ENCODE measurements at regions of chr13 and their contacts with region 1.

Region 1: GRCh38 chr13:30142486-30143211 is 164.7 kb downstream of the KATNAL1 start:
- DNase-seq: peak; percentile 28
- H3K4me3 Mint-ChIP-seq: peak overlapping the region; percentile 31
- H3K27ac Mint-ChIP-seq: peak overlapping the region; percentile 86
- H3K4me1 Mint-ChIP-seq: peaks cover 61% of the 10 kb centered on the region
- H3K27me3 Mint-ChIP-seq: peaks cover 4% of the 10 kb centered on the region

Region 2: DNA sequence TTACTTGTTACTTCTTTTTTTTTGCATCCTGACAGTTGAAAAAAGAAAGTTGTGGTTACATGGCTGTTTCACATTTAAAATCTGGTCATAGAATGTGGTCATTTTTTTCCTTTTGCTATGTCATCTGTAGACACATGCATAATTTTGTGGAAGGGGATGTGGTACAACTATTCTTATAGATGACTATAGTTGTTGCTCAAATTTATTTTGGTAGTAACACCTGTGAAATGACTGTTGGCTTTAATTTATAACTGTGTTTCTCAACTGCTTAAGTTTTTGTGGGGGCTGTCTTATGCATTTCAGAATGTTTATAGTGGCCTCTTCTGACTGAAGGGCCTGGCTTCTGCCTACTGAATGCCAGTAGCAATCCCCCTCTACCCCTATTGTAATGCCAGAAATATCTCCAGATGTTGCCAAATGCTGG is 1873.8 kb before region 1 on chr13:
- intact Hi-C with region 1: loop called (anchors 5 kb)
- DNase-seq: no peak
- H3K4me3 Mint-ChIP-seq: peak overlapping the region; percentile 49
- H3K27ac Mint-ChIP-seq: peak overlapping the region; percentile 70
- H3K4me1 Mint-ChIP-seq: peaks cover 27% of the 10 kb centered on the region
- H3K27me3 Mint-ChIP-seq: no peaks in the 10 kb centered on the region

Region 3: DNA sequence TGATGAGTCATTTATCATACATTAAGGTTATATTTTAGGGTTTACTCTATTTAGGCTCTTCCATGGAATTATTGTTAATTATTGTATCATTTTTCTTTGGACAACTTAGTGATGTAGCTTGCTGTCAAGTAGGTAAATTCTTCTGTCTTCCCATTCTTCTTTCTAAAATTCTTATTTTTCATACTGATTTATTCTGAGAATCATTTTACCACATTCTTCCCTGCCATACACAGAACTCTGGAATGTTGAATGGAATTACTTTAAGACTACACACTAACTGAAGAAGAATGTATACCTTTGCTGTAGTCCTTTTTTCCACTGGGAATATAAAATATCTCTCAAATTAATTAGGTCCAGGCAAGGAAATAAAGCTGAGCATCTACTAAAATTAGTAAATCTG is 522.7 kb before region 1 on chr13:
- intact Hi-C with region 1: no loop called
- DNase-seq: no peak
- H3K4me3 Mint-ChIP-seq: no peak overlapping the region
- H3K27ac Mint-ChIP-seq: no peak overlapping the region
- H3K4me1 Mint-ChIP-seq: no peaks in the 10 kb centered on the region
- H3K27me3 Mint-ChIP-seq: peaks cover 34% of the 10 kb centered on the region

Region 4: GRCh38 chr13:29978211-29978610 is 164.4 kb before region 1 on chr13:
- intact Hi-C with region 1: no loop called
- DNase-seq: no peak
- H3K4me3 Mint-ChIP-seq: no peak overlapping the region
- H3K27ac Mint-ChIP-seq: no peak overlapping the region
- H3K4me1 Mint-ChIP-seq: peaks cover 16% of the 10 kb centered on the region
- H3K27me3 Mint-ChIP-seq: peaks cover 8% of the 10 kb centered on the region

Region 5: DNA sequence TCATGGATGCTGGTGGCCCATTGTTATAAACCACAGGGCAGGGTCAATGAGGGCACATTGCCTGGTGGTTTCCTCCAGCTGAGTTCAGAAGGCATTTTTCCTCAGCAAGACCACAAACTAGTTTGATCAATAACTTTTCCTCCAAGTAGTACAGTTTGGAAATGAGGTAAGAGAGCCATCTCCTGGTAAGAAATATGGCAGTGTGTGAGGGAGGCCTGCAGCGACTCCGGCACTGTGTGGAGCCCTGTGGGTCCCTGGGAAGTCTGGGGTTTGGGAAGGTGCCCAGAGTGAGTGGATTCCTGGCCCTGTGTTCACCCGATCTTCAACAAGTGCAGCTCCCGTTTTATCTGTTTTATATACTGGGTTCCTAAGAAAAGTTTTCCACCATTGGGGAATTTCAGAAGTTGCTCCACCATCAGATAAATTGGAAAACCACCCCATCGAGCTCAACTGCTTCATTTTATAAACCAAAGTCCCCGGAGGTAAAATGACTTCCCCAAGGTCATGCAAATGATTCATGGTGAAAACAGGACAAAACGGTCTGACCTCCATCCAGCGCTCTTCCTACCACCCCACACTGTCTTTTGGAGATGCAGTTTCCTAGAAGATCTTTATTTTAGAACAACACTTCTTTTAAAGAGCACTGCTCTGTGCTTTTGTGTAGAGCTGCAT is 16.3 kb after region 1 on chr13:
- intact Hi-C with region 1: loop called (anchors 1 kb)
- DNase-seq: no peak
- H3K4me3 Mint-ChIP-seq: peak overlapping the region; percentile 23
- H3K27ac Mint-ChIP-seq: peak overlapping the region; percentile 78
- H3K4me1 Mint-ChIP-seq: peaks cover 43% of the 10 kb centered on the region
- H3K27me3 Mint-ChIP-seq: peaks cover under 1% of the 10 kb centered on the region

Region 6: DNA sequence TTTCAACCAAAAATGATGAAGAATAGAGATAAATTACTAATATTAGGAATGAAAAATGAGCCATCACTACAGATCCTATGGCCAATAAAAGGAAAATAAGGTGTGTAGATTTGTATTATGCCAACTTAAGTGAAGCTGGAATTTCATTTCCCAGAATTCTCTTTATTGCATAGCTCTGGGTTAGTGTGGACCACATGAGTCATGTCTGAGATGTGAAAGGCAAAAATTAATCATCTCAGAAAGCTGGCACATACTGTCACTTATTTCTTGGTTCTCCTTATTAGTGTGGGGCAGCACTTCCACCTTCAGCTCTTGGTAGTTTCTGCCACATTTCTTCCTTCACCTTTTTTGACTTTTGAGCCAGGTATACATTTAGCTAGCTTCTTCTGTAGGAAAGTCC is 82.1 kb after region 1 on chr13:
- intact Hi-C with region 1: loop called (anchors 1 kb)
- DNase-seq: no peak
- H3K4me3 Mint-ChIP-seq: no peak overlapping the region
- H3K27ac Mint-ChIP-seq: peak overlapping the region; percentile 18
- H3K4me1 Mint-ChIP-seq: peaks cover 5% of the 10 kb centered on the region
- H3K27me3 Mint-ChIP-seq: no peaks in the 10 kb centered on the region

Region 7: GRCh38 chr13:30253830-30254229 is 111.2 kb after region 1 on chr13:
- intact Hi-C with region 1: loop called (anchors 1 kb)
- DNase-seq: no peak
- H3K4me3 Mint-ChIP-seq: no peak overlapping the region
- H3K27ac Mint-ChIP-seq: no peak overlapping the region
- H3K4me1 Mint-ChIP-seq: peaks cover 7% of the 10 kb centered on the region
- H3K27me3 Mint-ChIP-seq: no peaks in the 10 kb centered on the region

Region 8: GRCh38 chr13:30429721-30430694 is 287.4 kb after region 1 on chr13:
- intact Hi-C with region 1: loop called (anchors 1 kb)
- DNase-seq: no peak
- H3K4me3 Mint-ChIP-seq: peak overlapping the region; percentile 75
- H3K27ac Mint-ChIP-seq: peak overlapping the region; percentile 97
- H3K4me1 Mint-ChIP-seq: peaks cover 29% of the 10 kb centered on the region
- H3K27me3 Mint-ChIP-seq: peaks cover 6% of the 10 kb centered on the region